ENCODE measurements at regions of chr14 and their contacts with region 1.

Region 1: GRCh38 chr14:76034566-76034965 is 49.0 kb downstream of the IFT43 start:
- DNase-seq: no peak

Region 2: GRCh38 chr14:76151398-76152339 is 117.1 kb after region 1 on chr14 and contains the start of gene GPATCH2L:
- in situ Hi-C with region 1: no loop called
- DNase-seq: peak; percentile 91

Region 3: GRCh38 chr14:76208340-76208739 is 173.8 kb after region 1 on chr14:
- in situ Hi-C with region 1: no loop called
- DNase-seq: peak; percentile 56

Region 4: DNA sequence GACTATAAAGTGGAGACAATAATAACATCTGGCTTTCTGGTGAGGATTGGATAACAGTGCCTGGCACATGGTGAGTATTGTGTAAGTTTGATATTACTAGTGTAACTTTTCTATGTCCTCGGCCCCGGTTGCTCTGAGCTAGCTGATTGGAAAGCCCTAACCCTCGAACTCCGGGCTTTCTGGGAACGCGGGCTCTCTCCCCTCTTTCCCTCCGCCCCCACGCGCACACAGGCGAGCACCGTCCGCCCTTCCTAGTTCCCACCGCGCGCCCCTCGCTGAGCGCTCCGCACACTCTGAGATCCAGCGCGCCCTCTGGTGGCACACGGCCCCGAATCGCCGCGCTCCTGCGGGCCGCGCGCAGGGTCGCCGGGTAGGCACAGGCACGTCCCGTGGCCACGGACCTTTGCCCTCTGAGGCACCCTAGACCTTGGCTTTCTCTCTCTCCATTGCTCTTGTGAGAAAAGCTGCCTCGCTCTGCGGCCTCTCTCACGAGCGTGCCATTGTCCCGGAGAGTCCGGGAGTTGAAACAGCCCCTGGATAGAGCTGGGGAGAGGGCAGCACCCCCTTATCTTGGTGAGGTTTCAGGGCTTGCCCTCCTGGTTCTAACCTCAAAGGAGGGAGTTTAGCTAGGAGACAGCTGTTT is 318.2 kb after region 1 on chr14:
- in situ Hi-C with region 1: loop called (anchors 25 kb)
- DNase-seq: peak; percentile 65